ENCODE measurements at regions of chr20 and their contacts with region 1.

Region 1: GRCh38 chr20:52242237-52243230 is 51.0 kb upstream of the ZFP64 start:
- DNase-seq: peak; percentile 11
- ATAC-seq: no peak
- H3K4me3 ChIP-seq: no peak overlapping the region
- H3K27ac ChIP-seq: no peak overlapping the region
- H3K4me1 ChIP-seq: no peaks in the 10 kb centered on the region
- H3K27me3 ChIP-seq: no peaks in the 10 kb centered on the region; the same call in 1 of the 2 replicates
- CTCF ChIP-seq: peak; percentile 54
- POLR2A ChIP-seq: no peak
- RAD21 ChIP-seq: peak; percentile 38

Region 2: GRCh38 chr20:52379723-52380336 is 137.3 kb after region 1 on chr20:
- CTCF ChIA-PET with region 1: interaction called, 3 read pairs
- POLR2A ChIA-PET with region 1: no interaction called
- dilution Hi-C with region 1: no loop called
- in situ Hi-C with region 1: no loop called
- intact Hi-C with region 1: loop called (anchors 1 kb)
- DNase-seq: peak; percentile 17
- ATAC-seq: peak; percentile 63; the same call in 1 of the 2 replicates
- H3K4me3 ChIP-seq: no peak overlapping the region
- H3K27ac ChIP-seq: no peak overlapping the region
- H3K4me1 ChIP-seq: no peaks in the 10 kb centered on the region
- H3K27me3 ChIP-seq: no peaks in the 10 kb centered on the region
- CTCF ChIP-seq: peak; percentile 74
- POLR2A ChIP-seq: no peak
- RAD21 ChIP-seq: peak; percentile 53

Region 3: DNA sequence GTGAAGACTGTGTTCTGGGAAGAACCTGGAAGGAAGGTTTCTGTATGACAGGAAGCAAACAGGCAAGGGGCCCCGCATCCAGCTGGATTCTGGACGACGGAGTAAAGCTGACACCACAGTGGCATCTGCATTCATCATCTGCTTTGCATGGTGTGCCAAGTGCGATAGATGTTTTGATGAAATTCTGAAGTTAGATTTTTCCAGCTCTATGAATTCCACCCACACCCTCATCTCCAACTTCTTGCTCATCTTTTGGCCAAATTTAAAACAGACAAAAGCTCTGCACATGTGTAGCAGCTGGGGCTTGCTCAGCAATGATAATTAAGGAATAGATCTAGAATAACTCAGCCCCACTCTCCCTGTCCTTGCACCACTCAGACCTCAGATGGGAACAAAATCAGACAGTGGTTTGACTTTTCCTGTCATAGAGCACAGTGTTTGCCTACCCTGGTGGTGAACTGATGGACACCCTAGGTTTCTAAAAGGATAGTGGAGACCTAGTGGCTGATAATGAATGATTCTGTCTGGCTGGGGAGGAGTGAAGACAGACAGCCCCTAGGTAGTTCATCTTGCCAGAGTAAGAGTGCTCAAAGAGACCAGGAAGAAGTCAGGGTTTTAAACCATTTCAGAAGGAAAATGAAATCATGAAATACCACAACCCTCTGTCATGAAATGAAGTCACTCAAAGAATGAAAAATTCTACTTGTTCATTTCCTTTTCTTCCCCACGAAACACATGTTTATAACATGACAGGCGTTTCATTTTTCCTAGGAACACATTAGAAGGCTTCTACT is 1742.0 kb after region 1 on chr20:
- CTCF ChIA-PET with region 1: no interaction called
- POLR2A ChIA-PET with region 1: no interaction called
- dilution Hi-C with region 1: no loop called
- in situ Hi-C with region 1: loop called (anchors 25 kb)
- intact Hi-C with region 1: no loop called
- DNase-seq: no peak
- ATAC-seq: no peak
- H3K4me3 ChIP-seq: no peak overlapping the region
- H3K27ac ChIP-seq: no peak overlapping the region
- H3K4me1 ChIP-seq: no peaks in the 10 kb centered on the region
- H3K27me3 ChIP-seq: peaks cover 4% of the 10 kb centered on the region
- CTCF ChIP-seq: no peak
- POLR2A ChIP-seq: no peak
- RAD21 ChIP-seq: no peak

Measured in IMR-90 (cell line).